ENCODE measurements at regions of chr22 and their contacts with region 1.

Region 1: DNA sequence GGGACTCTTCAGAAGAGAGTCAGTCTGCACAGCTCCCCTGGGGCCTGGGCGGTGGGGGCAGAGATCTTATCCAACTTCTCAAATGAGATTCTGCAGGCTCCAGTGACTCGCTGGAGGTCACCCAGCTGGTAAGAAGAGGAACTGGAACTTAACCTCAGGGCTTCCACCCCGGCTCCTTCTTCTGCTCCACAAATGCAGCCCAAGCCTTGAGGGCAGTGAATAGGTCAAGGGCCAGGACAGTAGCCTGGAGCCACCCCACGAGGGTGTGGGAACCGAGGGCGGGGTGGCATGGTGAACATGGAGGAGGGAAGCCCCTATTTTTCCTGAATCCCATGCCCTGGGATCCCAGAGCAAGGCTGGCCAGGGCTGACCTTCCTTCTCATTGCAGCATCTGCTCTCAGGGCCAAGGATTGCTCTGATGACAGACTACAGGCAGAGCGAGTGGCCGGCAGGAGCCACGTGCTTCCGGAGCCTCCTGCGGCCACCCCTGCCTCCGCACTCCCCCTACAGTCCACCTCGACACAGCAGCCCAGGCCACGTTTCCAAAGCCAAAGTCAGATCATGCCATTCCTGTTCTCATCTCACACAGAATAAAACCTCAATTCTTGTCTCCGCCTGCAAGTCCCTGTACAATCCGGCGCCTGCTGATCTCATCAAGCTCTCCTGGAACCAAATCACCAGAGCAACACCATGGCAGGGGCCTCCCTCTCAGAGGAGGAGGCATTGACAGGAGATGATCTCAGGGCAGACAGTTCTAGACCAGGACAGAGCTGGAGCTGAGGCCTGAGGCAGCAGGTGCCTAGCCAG is 21.1 kb upstream of the UPK3A start:
- DNase-seq: peak; percentile 75
- H3K4me3 Mint-ChIP-seq: no peak overlapping the region
- H3K27ac Mint-ChIP-seq: no peak overlapping the region
- H3K4me1 Mint-ChIP-seq: peaks cover 8% of the 10 kb centered on the region
- H3K27me3 Mint-ChIP-seq: no peaks in the 10 kb centered on the region
- CTCF ChIP-seq: peak; percentile 63

Region 2: DNA sequence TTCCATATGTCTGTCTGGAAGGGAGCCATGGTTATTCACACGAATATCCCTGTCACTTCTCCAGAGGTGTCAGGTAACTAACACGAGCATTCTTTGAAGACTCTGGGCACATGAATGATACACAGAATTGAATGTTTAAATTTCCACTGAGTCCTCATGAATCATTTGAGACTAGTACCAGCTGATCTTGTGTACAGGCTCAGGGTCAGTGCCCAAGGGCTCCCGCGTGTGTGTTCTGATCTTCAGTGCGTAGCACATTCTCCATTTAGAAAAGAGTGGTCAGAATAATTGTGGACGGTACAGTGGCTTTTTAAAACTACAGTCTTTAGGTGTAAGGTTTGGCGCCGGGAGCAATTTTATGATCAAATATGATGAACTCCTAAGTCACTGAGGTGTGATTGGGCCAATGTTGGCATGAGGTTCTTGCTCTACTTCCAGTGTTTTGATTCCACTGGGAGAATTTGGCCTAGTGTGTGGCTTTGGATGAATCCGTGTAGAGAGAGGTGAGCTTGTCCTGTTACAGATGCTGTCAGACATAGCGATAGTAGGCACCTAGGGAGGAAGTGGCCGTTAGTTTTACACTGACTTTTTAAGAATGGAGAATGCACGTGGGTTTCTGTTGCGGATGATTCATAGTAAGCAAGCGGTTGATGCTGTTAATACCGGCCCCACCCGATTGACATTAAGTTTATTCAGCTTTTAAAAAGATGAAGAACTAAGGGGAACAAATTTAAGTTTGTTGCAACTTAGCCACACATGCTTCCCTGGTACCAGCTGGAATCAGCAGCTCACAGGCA is 77.8 kb before region 1 on chr22:
- CTCF ChIA-PET with region 1: no interaction called
- POLR2A ChIA-PET with region 1: no interaction called
- intact Hi-C with region 1: loop called (anchors 5 kb)
- DNase-seq: no peak
- H3K4me3 Mint-ChIP-seq: no peak overlapping the region
- H3K27ac Mint-ChIP-seq: no peak overlapping the region
- H3K4me1 Mint-ChIP-seq: peaks cover 6% of the 10 kb centered on the region
- H3K27me3 Mint-ChIP-seq: no peaks in the 10 kb centered on the region
- CTCF ChIP-seq: no peak

Region 3: GRCh38 chr22:45208993-45209801 is 54.5 kb before region 1 on chr22:
- CTCF ChIA-PET with region 1: no interaction called
- POLR2A ChIA-PET with region 1: interaction called, 3 read pairs
- intact Hi-C with region 1: loop called (anchors 2 kb)
- DNase-seq: peak; percentile 64
- H3K4me3 Mint-ChIP-seq: no peak overlapping the region
- H3K27ac Mint-ChIP-seq: no peak overlapping the region
- H3K4me1 Mint-ChIP-seq: peaks cover 17% of the 10 kb centered on the region
- H3K27me3 Mint-ChIP-seq: no peaks in the 10 kb centered on the region
- CTCF ChIP-seq: peak; percentile 93